Breast epithelium (tissue), 4 donors: ENCODE measurements at regions of chr7 and their contacts with region 1.

Region 1: GRCh38 chr7:126339813-126340212 is 912.9 kb downstream of the GRM8 start:
- DNase-seq: no peak
- H3K4me3 ChIP-seq: no peak overlapping the region
- H3K27ac ChIP-seq: no peak overlapping the region
- H3K4me1 ChIP-seq: no peaks in the 10 kb centered on the region
- H3K27me3 ChIP-seq: no peaks in the 10 kb centered on the region
- CTCF ChIP-seq: no peak
- POLR2A ChIP-seq: no peak

Region 2: DNA sequence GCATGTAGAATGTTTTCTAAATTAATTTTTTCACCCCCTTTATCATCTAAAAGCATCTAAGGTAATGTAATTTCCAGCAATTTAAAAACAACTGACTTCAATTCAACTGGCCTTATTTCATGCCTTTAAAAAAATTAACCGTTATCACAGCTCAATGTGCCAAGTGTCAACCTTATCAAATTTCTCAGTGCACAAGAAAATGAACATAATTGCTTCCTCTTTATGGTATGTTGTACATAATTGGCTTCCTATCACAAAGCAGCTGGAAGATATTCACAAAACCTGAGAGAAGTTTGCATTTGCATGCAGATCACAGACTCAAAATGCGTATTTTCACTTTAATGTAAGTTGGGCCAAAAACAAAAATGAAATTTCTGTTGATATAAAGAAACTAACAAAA is 53.5 kb before region 1 on chr7:
- intact Hi-C with region 1: no loop called
- DNase-seq: no peak
- H3K4me3 ChIP-seq: no peak overlapping the region
- H3K27ac ChIP-seq: no peak overlapping the region
- H3K4me1 ChIP-seq: no peaks in the 10 kb centered on the region
- H3K27me3 ChIP-seq: no peaks in the 10 kb centered on the region
- CTCF ChIP-seq: no peak
- POLR2A ChIP-seq: no peak

Region 3: GRCh38 chr7:126401918-126402317 is 62.1 kb after region 1 on chr7:
- intact Hi-C with region 1: loop called (anchors 2 kb)
- DNase-seq: no peak
- H3K4me3 ChIP-seq: no peak overlapping the region
- H3K27ac ChIP-seq: no peak overlapping the region
- H3K4me1 ChIP-seq: no peaks in the 10 kb centered on the region
- H3K27me3 ChIP-seq: no peaks in the 10 kb centered on the region
- CTCF ChIP-seq: no peak
- POLR2A ChIP-seq: no peak